PC-3 (cell line): ENCODE measurements at regions of chr2 and their contacts with region 1.

Region 1: DNA sequence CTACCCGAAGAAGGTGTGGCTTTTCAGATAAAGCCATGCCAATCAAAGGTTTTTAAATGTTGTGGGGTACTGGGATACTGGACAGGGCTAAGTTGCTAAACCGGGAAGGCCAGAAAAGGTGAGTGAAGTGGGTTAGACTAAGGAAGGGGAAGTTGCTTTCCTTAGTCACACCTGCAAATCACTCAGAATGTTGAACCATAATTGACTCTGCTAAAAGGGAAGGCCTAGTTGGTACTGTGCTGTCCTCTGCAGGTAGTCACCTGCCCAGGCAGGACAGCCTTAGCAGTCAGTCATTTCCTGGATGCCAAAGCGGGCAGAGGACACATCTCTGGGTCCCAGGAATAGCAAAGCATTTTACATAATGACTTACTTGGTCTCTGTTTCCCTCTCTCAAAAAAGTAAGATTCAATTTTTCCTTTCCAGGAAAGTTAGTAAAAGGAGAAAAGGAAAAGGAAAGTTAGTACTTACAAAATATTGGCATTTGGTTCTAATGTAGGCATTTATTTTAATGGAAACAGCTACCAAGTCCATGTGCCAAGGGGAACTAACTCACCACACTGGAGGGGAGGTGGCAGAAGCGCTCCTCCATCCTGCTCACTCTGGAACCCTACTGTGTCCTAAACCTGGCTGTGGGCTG is 60.3 kb downstream of the RFTN2 start:
- DNase-seq: peak; percentile 78
- ATAC-seq: peak; percentile 76
- H3K4me3 ChIP-seq: no peak overlapping the region; the same call in 1 of the 2 replicates
- H3K27ac ChIP-seq: peak overlapping the region; percentile 28
- H3K4me1 ChIP-seq: peaks cover 33% of the 10 kb centered on the region
- H3K27me3 ChIP-seq: no peaks in the 10 kb centered on the region
- CTCF ChIP-seq: peak; percentile 73

Region 2: GRCh38 chr2:196040218-196040617 is 1574.9 kb before region 1 on chr2:
- CTCF ChIA-PET with region 1: no interaction called
- POLR2A ChIA-PET with region 1: no interaction called
- intact Hi-C with region 1: no loop called
- DNase-seq: no peak
- ATAC-seq: no peak
- H3K4me3 ChIP-seq: no peak overlapping the region
- H3K27ac ChIP-seq: no peak overlapping the region
- H3K4me1 ChIP-seq: no peaks in the 10 kb centered on the region
- H3K27me3 ChIP-seq: no peaks in the 10 kb centered on the region
- CTCF ChIP-seq: no peak

Region 3: DNA sequence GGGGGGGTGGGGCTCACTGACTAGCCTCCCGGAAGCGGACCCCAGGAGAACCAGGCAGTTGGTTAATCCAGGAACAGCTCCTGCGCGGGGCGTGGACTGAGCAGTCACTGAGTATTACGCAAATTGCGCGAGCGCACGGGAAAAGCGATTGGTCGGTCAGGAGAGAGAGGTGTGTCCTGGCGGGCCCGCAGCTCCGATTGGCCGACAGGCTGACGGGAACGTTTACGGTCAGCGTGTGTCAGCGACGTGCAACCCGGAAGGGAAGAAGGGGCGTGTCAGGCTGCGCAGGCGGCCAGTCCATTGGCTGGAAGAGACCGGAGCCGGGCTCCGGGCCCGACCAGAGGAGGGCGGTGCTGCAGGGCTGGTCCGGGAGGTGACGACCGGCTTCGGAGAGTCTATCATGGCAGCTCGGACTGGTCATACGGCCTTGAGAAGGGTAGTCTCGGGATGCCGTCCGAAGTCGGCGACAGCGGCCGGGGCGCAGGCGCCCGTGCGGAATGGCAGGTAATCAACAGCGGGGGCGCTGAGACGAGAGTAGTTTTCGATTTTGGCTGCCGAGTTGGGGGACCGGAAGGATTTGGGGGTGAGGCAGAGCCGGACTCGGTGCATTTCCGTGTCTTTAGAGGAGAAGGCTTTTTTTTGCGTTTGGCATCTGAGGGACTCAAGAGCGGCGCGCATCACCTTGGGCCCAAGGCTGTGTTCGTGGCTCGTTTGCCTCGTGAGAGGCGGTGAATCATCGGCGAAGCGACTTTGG is 161.8 kb before region 1 on chr2 and contains the start of gene COQ10B:
- CTCF ChIA-PET with region 1: interaction called, 4 read pairs
- POLR2A ChIA-PET with region 1: no interaction called
- intact Hi-C with region 1: loop called (anchors 1 kb)
- DNase-seq: peak; percentile 99
- ATAC-seq: peak; percentile 95
- H3K4me3 ChIP-seq: peak within 1 kb of the TSS; percentile 84
- H3K27ac ChIP-seq: peak within 1 kb of the TSS; percentile 92
- H3K4me1 ChIP-seq: peaks cover 11% of the 10 kb centered on the region
- H3K27me3 ChIP-seq: no peaks in the 10 kb centered on the region
- CTCF ChIP-seq: no peak
- total RNA-seq, gene COQ10B: 23.5 and 25.7 TPM in 2 replicates

Region 4: GRCh38 chr2:197499594-197500526 is 115.3 kb before region 1 on chr2 and contains the starts of genes HSPD1 and HSPE1:
- CTCF ChIA-PET with region 1: no interaction called
- POLR2A ChIA-PET with region 1: no interaction called
- intact Hi-C with region 1: loop called (anchors 1 kb)
- DNase-seq: peak; percentile 99
- ATAC-seq: peak; percentile 81
- H3K4me3 ChIP-seq: peak within 1 kb of the TSS; percentile 89
- H3K27ac ChIP-seq: peak within 1 kb of the TSS; percentile 85
- H3K4me1 ChIP-seq: peaks cover 36% of the 10 kb centered on the region
- H3K27me3 ChIP-seq: no peaks in the 10 kb centered on the region
- CTCF ChIP-seq: no peak
- total RNA-seq, gene HSPD1: 396 and 410 TPM in 2 replicates
- total RNA-seq, gene HSPE1: 266 and 321 TPM in 2 replicates

Region 5: DNA sequence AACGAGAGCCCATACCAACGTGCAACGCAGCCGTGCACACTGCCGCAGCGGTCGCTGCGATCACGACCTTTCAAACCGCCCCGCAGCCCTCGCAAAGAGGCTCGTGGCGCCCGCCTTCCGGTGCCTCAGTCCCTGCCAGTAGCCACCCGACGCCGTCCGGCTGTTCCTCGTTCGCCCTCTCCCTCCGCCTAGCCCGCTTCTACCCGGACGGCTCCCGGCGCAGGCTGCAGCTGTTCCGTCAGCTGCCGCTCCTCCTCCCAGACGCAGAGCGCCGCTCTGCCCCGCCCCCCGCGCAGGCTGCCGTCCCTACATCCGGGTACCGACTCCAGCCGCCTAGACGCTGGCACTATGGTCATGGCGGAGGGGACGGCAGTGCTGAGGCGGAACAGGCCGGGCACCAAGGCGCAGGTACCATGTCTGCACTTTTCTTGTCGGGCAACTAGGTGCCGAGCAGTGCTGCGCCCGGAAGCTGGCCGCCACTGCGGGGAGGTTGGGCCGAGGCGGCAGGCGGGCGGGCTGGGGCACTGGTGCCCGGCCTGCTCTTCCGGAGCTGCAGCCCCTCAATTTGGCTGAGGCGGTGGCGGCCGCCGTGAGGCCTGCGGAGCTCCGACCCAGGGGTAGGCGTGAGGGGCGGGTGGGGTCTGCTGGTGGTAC is 99.3 kb before region 1 on chr2 and contains the start of gene MOB4:
- CTCF ChIA-PET with region 1: no interaction called
- POLR2A ChIA-PET with region 1: no interaction called
- intact Hi-C with region 1: loop called (anchors 5 kb)
- DNase-seq: peak; percentile 95
- ATAC-seq: peak; percentile 92
- H3K4me3 ChIP-seq: peak within 1 kb of the TSS; percentile 89
- H3K27ac ChIP-seq: peak within 1 kb of the TSS; percentile 48
- H3K4me1 ChIP-seq: peaks cover 17% of the 10 kb centered on the region
- H3K27me3 ChIP-seq: no peaks in the 10 kb centered on the region
- CTCF ChIP-seq: no peak
- total RNA-seq, gene MOB4: 16.8 and 24.9 TPM in 2 replicates

Region 6: GRCh38 chr2:197576631-197577030 is 38.5 kb before region 1 on chr2:
- CTCF ChIA-PET with region 1: no interaction called
- POLR2A ChIA-PET with region 1: no interaction called
- intact Hi-C with region 1: loop called (anchors 1 kb)
- DNase-seq: peak; percentile 77
- ATAC-seq: peak; percentile 94
- H3K4me3 ChIP-seq: no peak overlapping the region
- H3K27ac ChIP-seq: 0 out of 2 replicates have a peak overlapping the region, but pooled peaks have one; percentile 12
- H3K4me1 ChIP-seq: peaks cover 16% of the 10 kb centered on the region
- H3K27me3 ChIP-seq: no peaks in the 10 kb centered on the region
- CTCF ChIP-seq: no peak

Region 7: GRCh38 chr2:197668296-197668695 is 53.2 kb after region 1 on chr2:
- CTCF ChIA-PET with region 1: no interaction called
- POLR2A ChIA-PET with region 1: no interaction called
- intact Hi-C with region 1: no loop called
- DNase-seq: peak; percentile 24
- ATAC-seq: peak; percentile 38; the same call in 1 of the 2 replicates
- H3K4me3 ChIP-seq: no peak overlapping the region
- H3K27ac ChIP-seq: no peak overlapping the region
- H3K4me1 ChIP-seq: no peaks in the 10 kb centered on the region
- H3K27me3 ChIP-seq: no peaks in the 10 kb centered on the region
- CTCF ChIP-seq: no peak

Region 8: DNA sequence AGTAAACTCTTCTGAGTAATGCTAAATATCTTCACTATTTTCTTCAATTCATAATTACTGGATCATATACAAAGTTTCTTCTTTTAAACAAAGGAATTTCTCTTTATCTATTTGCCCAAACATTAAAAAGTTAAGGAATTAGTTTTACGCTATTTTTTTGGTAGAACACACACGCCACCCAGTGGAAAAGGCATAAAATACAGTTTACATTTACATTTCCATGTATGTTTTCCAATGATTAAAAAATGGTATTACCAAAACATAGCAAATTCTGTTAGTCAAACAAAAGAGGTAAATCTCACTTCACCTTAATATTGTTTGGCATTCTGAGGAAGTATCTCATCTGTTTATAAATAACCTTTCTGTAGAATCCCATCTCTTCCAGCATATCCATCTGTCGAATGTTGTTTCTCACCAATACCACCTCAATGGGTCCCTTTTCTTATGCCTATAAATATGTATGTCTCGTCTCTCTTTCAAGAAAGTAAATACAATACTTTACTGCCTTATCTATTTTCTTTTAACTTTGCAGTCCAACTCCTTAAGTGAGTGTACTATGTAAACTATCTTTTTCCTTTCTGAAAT is 162.8 kb after region 1 on chr2:
- CTCF ChIA-PET with region 1: no interaction called
- POLR2A ChIA-PET with region 1: no interaction called
- intact Hi-C with region 1: loop called (anchors 5 kb)
- DNase-seq: peak; percentile 66
- ATAC-seq: no peak
- H3K4me3 ChIP-seq: no peak overlapping the region
- H3K27ac ChIP-seq: no peak overlapping the region
- H3K4me1 ChIP-seq: no peaks in the 10 kb centered on the region
- H3K27me3 ChIP-seq: no peaks in the 10 kb centered on the region
- CTCF ChIP-seq: peak; percentile 89